Adrenal gland (tissue), 19 donors: ENCODE measurements at regions of chr20 and their contacts with region 1.

Region 1: DNA sequence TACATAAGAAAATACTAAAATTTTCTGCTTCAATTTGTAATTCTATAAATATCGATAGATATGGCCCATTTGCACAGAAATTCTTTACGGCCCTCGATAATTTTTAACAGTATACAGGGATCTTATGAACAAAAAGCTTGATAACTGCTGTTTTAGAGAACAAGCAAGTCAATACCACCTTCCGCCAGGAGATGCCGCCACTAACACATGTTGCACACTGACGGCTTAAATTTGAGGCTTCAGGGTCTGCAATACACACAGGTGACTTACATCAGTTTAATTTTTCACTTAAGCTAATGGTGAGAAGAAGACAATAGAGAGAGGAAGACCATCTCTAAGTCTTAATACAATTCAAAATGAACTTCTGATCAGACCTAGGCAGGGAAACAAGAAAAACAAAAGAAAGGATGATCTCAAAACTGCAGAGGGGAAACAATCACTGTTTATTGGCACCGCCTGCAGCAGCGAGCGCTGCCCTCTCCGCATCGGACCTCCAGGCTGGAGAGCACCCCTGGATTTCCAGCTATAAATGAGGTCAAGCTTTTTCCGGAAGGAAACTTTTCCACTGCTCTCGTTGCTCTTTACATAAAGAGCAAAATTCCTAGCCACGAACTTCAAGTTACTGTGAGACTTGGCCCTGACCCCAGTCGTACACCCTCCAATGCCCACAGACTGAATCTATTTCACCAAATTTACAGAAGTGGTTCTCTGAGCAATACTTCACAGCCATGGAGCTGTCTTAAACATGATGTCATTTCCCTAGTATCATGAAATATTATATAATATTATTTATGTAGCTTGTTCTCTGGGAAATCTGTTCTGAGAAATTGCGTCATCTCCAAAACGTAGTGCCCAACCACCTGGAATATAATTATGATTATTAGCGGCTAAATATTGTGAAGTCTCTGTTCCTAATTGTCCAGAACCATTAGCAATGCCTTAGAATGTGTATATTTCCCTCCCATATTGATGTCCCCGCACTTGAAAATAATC is 54.1 kb downstream of the OTOR start:
- DNase-seq: peak; percentile 42 to 91 (median 75)
- H3K4me3 ChIP-seq: no peak overlapping the region
- H3K27ac ChIP-seq: no peak overlapping the region
- H3K4me1 ChIP-seq: no peaks in the 10 kb centered on the region
- H3K27me3 ChIP-seq: peaks cover 12% of the 10 kb centered on the region
- CTCF ChIP-seq: peak; percentile 72 to 92 (median 76)
- POLR2A ChIP-seq: no peak

Region 2: DNA sequence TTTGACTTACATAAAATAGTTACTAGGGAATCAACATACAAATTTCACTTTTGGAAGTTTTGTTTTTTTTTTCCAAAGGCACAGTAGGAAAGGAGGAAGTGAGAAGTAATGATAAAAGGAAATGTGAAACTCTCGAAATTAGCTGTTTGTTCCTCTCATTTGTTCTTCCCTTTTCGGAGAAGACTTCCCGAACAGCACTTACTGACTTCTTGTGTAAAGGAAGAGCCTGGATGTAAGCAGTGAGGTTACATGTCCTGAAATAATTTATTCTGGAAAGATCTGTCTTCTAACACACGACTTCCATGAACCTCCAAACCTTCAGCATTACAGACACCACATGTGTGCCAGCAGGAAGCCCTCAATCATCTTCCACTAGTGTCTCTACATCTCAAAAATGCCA is 288.1 kb before region 1 on chr20:
- intact Hi-C with region 1: no loop called
- DNase-seq: no peak
- H3K4me3 ChIP-seq: no peak overlapping the region
- H3K27ac ChIP-seq: peak overlapping the region in 1 of 5 donors; percentile 59
- H3K4me1 ChIP-seq: peaks cover 0 to 7% of the 10 kb centered on the region in 2 donors
- H3K27me3 ChIP-seq: no peaks in the 10 kb centered on the region
- CTCF ChIP-seq: no peak
- POLR2A ChIP-seq: no peak

Region 3: DNA sequence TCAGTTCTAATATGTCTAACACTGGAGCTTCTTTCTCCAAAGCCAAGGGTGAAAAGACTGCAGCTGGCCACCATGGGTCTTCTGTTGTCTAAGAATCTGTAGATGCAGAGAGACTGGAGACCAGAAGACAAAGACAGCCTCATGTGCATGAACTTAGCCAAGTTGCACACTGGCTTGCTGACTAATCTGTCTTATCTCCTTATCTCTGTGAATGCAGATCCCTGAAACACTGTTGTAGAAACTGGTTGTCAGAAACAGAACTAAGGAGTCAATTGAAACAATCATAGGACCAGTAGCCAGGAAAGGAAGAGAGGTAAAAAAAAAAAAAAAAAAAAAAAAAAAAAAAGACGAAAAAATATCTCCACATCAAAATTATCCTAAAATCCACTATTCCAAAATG is 619.3 kb after region 1 on chr20:
- intact Hi-C with region 1: loop called in 1 of 2 experiments (anchors 5 kb)
- DNase-seq: peak in 1 of 7 donors; percentile 20
- H3K4me3 ChIP-seq: no peak overlapping the region
- H3K27ac ChIP-seq: no peak overlapping the region
- H3K4me1 ChIP-seq: no peaks in the 10 kb centered on the region
- H3K27me3 ChIP-seq: no peaks in the 10 kb centered on the region
- CTCF ChIP-seq: no peak
- POLR2A ChIP-seq: no peak

Region 4: DNA sequence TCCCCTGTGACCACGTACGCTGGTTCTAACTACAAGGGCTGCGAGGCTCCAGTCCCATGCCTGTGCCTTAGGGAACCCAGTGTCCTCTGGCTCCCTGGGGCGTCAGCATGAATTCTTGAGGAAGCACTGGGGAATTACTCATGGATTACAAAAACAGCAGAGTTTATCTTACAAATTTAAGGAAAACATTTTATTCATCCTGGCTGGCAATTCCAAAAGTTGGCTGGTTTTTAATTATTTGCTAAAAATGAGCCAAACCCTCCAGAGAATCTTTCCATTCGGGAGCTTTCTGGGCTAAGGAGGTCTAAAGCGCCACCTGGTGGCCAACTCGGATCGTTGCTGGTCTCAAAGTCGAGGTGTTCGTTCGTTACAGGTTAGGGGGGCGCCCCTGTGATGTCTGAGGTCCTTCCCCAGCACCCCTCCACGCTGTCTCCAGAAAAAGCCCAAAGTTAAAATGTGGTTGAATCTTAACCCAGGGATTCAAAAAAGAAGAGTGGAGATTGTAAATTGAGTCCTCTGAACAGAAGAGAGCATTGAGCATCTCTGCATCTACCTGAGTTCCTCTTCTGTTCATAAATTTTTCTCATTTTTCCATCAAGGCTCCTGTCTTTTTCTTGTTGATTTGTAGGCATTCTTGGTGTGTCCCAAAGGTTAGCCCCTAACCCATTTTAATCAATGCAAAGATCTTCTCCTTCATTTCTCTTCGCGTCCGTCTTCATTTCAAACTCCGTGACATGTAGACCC is 629.6 kb after region 1 on chr20:
- intact Hi-C with region 1: loop called (anchors 2 to 5 kb)
- DNase-seq: peak; percentile 37 to 80 (median 52)
- H3K4me3 ChIP-seq: no peak overlapping the region
- H3K27ac ChIP-seq: no peak overlapping the region
- H3K4me1 ChIP-seq: no peaks in the 10 kb centered on the region
- H3K27me3 ChIP-seq: no peaks in the 10 kb centered on the region
- CTCF ChIP-seq: peak; percentile 61 to 92 (median 79)
- POLR2A ChIP-seq: no peak

Region 5: DNA sequence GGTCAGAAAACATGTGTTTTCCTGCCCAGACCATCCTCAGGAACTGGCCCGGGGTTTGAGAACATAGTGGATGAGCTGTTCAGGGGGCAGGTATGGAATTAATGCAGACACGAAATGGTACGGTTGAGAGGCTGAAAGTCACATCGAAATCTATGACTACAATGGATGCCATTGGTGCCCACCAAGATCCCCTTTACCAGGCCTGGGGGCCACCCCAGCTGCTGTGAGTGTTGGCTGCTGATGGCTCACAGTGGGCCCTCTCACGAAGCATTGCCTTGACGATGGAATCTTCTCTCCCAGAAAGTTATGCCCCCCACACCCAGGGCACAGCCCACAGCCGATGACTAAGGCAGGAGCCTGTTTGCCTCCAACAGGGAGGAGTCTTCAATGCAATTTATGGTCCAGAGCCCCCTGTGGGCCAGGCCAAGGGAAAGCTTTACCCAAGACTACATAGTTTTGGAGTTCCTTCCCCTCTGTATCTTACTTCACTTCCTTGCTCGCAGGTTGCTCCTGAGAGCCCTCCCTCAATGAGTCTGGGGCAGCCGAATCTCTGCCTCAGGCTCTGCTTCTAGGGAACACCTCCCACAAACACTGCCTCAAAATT is 636.3 kb after region 1 on chr20:
- intact Hi-C with region 1: loop called in 1 of 2 experiments (anchors 5 kb)
- DNase-seq: no peak
- H3K4me3 ChIP-seq: no peak overlapping the region
- H3K27ac ChIP-seq: no peak overlapping the region
- H3K4me1 ChIP-seq: no peaks in the 10 kb centered on the region
- H3K27me3 ChIP-seq: no peaks in the 10 kb centered on the region
- CTCF ChIP-seq: no peak
- POLR2A ChIP-seq: no peak